Vagina (tissue), 2 donors: ENCODE measurements at regions of chr5 and their contacts with region 1.

Region 1: DNA sequence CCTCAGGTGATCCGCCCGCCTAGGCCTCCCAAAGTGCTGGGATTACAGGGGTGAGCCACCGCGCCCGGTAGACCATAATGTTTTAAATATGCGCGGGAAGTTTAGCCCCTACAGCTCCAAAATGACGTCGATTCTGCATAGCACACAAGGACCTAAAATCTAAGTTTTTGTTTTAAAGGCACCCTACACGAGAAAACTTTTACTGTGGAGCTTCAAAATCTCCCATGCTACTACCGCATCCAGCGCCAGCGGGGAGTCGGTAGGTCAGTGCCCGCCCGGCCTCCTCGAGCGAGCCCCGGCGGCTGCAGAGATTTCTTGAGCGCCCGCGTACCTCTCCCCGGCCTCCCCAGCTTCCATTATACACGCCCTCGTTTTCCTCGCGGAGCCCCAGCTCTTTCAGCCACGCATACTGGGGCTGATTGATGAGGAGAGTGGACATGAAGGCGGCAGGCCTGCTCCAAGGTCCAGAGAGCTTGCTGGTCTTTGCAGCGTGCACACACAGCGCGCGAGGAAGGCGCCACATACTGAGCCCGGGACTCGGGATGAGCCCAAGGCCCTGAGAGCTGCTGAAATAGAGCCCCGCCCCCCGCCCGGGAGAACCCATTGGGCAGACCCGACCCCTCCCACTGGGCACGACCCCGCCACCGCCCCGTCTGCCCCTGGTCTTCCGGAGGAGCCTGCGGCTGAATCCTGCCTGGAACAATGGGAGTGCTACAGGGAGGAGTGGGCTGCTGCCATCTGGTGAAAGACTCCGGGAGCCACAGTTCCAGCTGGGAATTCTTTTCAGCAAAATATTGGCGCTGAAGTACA is at the start of gene ALDH7A1:
- DNase-seq: peak in 1 of 2 donors; percentile 89
- H3K4me3 ChIP-seq: peak within 1 kb of the TSS; percentile 60 to 74
- H3K27ac ChIP-seq: peak within 1 kb of the TSS; percentile 85
- H3K4me1 ChIP-seq: peaks cover 32% of the 10 kb centered on the region
- H3K27me3 ChIP-seq: no peaks in the 10 kb centered on the region
- CTCF ChIP-seq: peak in 1 of 3 experiments; percentile 38
- POLR2A ChIP-seq: peak in 1 of 2 donors; percentile 6
- total RNA-seq, gene ALDH7A1: 63.6 TPM

Region 2: GRCh38 chr5:126339215-126339805 is 255.6 kb before region 1 on chr5:
- intact Hi-C with region 1: loop called (anchors 5 kb)
- DNase-seq: no peak
- H3K4me3 ChIP-seq: no peak overlapping the region
- H3K27ac ChIP-seq: no peak overlapping the region
- H3K4me1 ChIP-seq: no peaks in the 10 kb centered on the region
- H3K27me3 ChIP-seq: no peaks in the 10 kb centered on the region
- CTCF ChIP-seq: peak; percentile 67 to 85 (median 70)
- POLR2A ChIP-seq: no peak

Region 3: GRCh38 chr5:126776497-126777256 is 181.8 kb after region 1 on chr5 and contains the start of gene LMNB1:
- intact Hi-C with region 1: loop called (anchors 5 kb)
- DNase-seq: peak in 1 of 2 donors; percentile 94
- H3K4me3 ChIP-seq: peak within 1 kb of the TSS; percentile 80 to 90
- H3K27ac ChIP-seq: peak within 1 kb of the TSS; percentile 87
- H3K4me1 ChIP-seq: peaks cover 16% of the 10 kb centered on the region
- H3K27me3 ChIP-seq: no peaks in the 10 kb centered on the region
- CTCF ChIP-seq: peak in 1 of 3 experiments; percentile 10
- POLR2A ChIP-seq: no peak
- total RNA-seq, gene LMNB1: 20.9 TPM

Region 4: DNA sequence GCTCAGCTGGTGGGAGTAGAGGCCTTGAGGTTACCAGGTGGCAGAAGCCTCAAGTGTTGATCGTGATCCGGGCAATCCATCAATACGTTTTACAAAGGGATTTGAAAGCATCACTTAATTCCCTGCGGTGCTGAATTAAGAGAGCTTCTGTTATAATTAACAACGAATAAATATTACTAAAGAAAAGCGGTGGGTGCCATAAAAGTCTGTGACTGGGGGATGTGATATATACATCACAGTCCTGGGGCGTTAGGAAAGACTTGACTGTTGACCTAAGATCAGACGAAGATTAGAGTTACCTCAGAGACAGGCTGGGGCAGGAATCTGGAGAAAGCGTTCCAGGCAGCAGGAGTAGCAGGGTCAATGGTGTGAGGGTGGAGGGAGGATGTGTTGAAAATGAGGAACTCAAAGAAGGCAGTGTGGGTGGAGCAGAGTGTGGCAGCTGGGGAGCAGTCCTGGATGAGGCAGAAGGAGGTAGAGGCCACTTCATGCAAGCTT is 485.2 kb after region 1 on chr5:
- intact Hi-C with region 1: no loop called
- DNase-seq: no peak
- H3K4me3 ChIP-seq: no peak overlapping the region
- H3K27ac ChIP-seq: no peak overlapping the region
- H3K4me1 ChIP-seq: no peaks in the 10 kb centered on the region
- H3K27me3 ChIP-seq: no peaks in the 10 kb centered on the region
- CTCF ChIP-seq: no peak
- POLR2A ChIP-seq: no peak